Naive thymus-derived CD4-positive, alpha-beta T cell (primary cell): ENCODE measurements at regions of chr20 and their contacts with region 1.

Region 1: GRCh38 chr20:31514159-31515071 is at the start of gene HM13:
- DNase-seq: peak; percentile 79 to 89 (median 88)
- ATAC-seq: peak; percentile 96
- H3K4me3 ChIP-seq: peak within 1 kb of the TSS; percentile 90
- H3K4me3 Mint-ChIP-seq: peak within 1 kb of the TSS in 3 of 10 donors; percentile 48 to 77 (median 75)
- H3K27ac ChIP-seq: peak within 1 kb of the TSS; percentile 83
- H3K27ac Mint-ChIP-seq: peak within 1 kb of the TSS in 4 of 9 donors; percentile 80 to 92 (median 87)
- H3K4me1 ChIP-seq: peaks cover 26% of the 10 kb centered on the region in 2 donors
- H3K4me1 Mint-ChIP-seq: peaks cover 5 to 13% (median 9%) of the 10 kb centered on the region in 7 donors
- H3K27me3 ChIP-seq: no peaks in the 10 kb centered on the region
- H3K27me3 Mint-ChIP-seq: peaks cover 0 to under 1% (median 0%) of the 10 kb centered on the region in 5 donors
- total RNA-seq, gene HM13: 102 to 197 (median 133) TPM

Region 2: DNA sequence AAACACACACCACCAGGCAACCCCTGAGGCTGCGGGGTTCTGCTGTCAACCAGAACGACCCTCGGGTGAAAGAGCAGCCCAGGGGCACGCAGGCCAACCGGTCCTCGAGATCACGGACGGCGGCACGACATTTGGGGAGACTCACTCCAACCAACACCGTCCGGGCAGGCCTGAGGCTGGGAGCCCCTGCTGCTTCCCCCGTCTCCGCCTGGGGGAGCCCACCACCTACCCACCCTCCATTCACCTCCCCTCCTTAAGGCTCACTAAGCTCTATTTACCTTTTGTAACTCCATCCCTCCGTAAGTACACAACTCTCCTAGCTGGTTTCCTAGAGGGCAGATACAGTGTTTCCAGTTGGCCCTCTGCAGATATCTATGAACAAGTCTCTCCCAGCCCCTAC is 1228.3 kb before region 1 on chr20:
- CTCF ChIA-PET with region 1: no interaction called
- POLR2A ChIA-PET with region 1: no interaction called
- intact Hi-C with region 1: loop called in 1 of 2 experiments (anchors 10 kb)
- DNase-seq: no peak
- ATAC-seq: no peak
- H3K4me3 ChIP-seq: no peak overlapping the region
- H3K4me3 Mint-ChIP-seq: peak overlapping the region in 2 of 10 donors; percentile 17 to 58
- H3K27ac ChIP-seq: no peak overlapping the region
- H3K27ac Mint-ChIP-seq: peak overlapping the region in 4 of 9 donors; percentile 4 to 82 (median 35)
- H3K4me1 ChIP-seq: peaks cover 4 to 5% of the 10 kb centered on the region in 2 donors
- H3K4me1 Mint-ChIP-seq: peaks cover 0 to 58% (median 24%) of the 10 kb centered on the region in 7 donors
- H3K27me3 ChIP-seq: no peaks in the 10 kb centered on the region
- H3K27me3 Mint-ChIP-seq: no peaks in the 10 kb centered on the region

Region 3: DNA sequence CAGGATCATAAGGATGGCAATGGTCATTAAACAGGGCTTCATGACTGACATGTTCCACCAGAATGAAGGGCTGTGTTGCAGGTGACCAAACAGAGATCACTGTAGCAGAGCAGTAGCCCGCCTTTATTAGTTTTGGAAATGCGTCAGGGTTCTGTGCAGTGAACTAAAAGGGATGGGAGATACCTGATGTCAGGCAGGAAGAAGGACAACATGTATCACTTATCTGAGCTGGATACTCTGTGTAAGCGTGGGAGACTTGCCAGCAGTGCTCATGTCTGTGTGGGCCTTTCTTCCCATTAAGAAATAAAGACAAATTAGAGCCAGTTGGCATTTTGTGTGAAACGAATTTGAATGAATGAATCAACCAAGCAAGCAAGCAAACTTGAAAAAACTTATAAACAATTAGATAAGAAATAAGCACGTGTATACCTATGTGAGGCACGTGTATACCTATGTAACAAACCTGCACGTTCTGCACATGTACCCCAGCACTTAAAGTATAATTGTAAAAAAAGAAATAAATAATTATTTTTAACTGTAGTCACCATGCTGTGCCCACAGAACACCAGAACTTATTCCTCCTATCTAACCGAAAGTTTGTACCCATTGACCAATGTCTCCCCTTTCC is 205.8 kb before region 1 on chr20 and contains the start of gene DEFB116:
- CTCF ChIA-PET with region 1: no interaction called
- POLR2A ChIA-PET with region 1: no interaction called
- intact Hi-C with region 1: no loop called
- DNase-seq: no peak
- ATAC-seq: no peak
- H3K4me3 ChIP-seq: no peak within 1 kb of the TSS
- H3K4me3 Mint-ChIP-seq: no peak within 1 kb of the TSS
- H3K27ac ChIP-seq: no peak within 1 kb of the TSS
- H3K27ac Mint-ChIP-seq: no peak within 1 kb of the TSS
- H3K4me1 ChIP-seq: no peaks in the 10 kb centered on the region
- H3K4me1 Mint-ChIP-seq: peaks cover 0 to 2% (median 0%) of the 10 kb centered on the region in 7 donors
- H3K27me3 ChIP-seq: no peaks in the 10 kb centered on the region
- H3K27me3 Mint-ChIP-seq: peaks cover 0 to 9% (median 0%) of the 10 kb centered on the region in 5 donors
- total RNA-seq, gene DEFB116: not detected

Region 4: GRCh38 chr20:31494131-31494530 is 20.3 kb before region 1 on chr20:
- CTCF ChIA-PET with region 1: no interaction called
- POLR2A ChIA-PET with region 1: no interaction called
- intact Hi-C with region 1: no loop called
- DNase-seq: no peak
- ATAC-seq: no peak
- H3K4me3 ChIP-seq: no peak overlapping the region
- H3K4me3 Mint-ChIP-seq: no peak overlapping the region
- H3K27ac ChIP-seq: no peak overlapping the region
- H3K27ac Mint-ChIP-seq: no peak overlapping the region
- H3K4me1 ChIP-seq: no peaks in the 10 kb centered on the region
- H3K4me1 Mint-ChIP-seq: peaks cover 0 to 5% (median 0%) of the 10 kb centered on the region in 7 donors
- H3K27me3 ChIP-seq: peaks cover 0 to 4% of the 10 kb centered on the region in 2 donors
- H3K27me3 Mint-ChIP-seq: peaks cover 10 to 24% (median 18%) of the 10 kb centered on the region in 5 donors

Region 5: DNA sequence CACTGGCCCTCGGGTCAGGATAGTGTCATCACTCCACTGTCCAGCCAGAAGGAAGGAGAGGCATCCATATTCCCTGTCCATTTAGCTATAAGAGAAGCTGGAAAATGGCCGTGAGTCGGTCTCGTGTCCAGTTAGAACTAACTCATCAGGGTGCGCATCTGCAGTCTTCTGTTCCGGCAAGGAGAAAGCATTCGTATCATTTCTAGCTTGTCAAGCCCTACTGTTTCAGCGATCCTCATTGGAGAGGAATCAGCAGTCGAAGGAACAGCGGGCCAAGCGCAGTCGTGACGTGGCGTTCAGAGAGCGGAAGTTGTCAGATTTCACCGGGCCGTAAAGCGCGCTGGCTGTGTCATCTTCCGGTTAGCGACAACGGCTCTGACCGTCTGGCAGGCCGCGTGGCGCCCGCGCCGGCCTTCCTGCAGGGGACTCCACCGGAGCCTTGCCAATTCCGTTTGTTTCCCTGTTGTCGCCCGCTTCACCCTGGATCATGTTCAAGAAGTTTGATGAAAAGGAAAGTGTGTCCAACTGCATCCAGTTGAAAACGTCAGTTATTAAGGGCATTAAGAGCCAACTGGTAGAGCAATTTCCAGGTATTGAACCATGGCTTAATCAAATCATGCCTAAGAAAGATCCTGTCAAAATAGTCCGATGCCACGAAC is 32.7 kb after region 1 on chr20:
- CTCF ChIA-PET with region 1: no interaction called
- POLR2A ChIA-PET with region 1: interaction called, 3 read pairs
- intact Hi-C with region 1: loop called (anchors 1 kb)
- DNase-seq: peak; percentile 56 to 84 (median 80)
- ATAC-seq: peak; percentile 92
- H3K4me3 ChIP-seq: peak overlapping the region; percentile 85
- H3K4me3 Mint-ChIP-seq: peak overlapping the region; percentile 86 to 99 (median 94)
- H3K27ac ChIP-seq: peak overlapping the region; percentile 87
- H3K27ac Mint-ChIP-seq: peak overlapping the region; percentile 94 to 100 (median 98)
- H3K4me1 ChIP-seq: peaks cover 0 to 6% of the 10 kb centered on the region in 2 donors
- H3K4me1 Mint-ChIP-seq: peaks cover 8 to 36% (median 28%) of the 10 kb centered on the region in 7 donors
- H3K27me3 ChIP-seq: no peaks in the 10 kb centered on the region
- H3K27me3 Mint-ChIP-seq: no peaks in the 10 kb centered on the region

Region 6: DNA sequence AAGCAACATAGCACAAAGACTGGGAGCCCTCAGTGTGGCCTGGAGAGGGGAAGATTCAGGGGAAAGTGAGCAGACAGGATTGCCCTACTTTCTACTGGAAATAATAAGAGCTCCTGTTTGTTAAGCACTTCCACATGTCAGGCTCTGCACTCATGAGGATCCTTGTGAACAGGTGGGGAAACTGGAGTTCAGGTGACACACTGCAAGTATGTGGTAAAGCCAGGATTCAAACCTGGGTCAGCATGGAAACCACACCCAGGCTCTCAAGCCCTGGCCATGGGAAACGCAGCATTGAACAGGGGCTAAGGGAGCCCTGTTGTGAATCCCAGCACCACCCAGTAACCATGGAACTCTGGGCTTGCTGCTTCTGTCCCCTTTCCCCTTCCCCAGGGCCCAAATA is 47.8 kb after region 1 on chr20:
- CTCF ChIA-PET with region 1: no interaction called
- POLR2A ChIA-PET with region 1: no interaction called
- intact Hi-C with region 1: no loop called
- DNase-seq: no peak
- ATAC-seq: no peak
- H3K4me3 ChIP-seq: no peak overlapping the region
- H3K4me3 Mint-ChIP-seq: no peak overlapping the region
- H3K27ac ChIP-seq: no peak overlapping the region
- H3K27ac Mint-ChIP-seq: no peak overlapping the region
- H3K4me1 ChIP-seq: peaks cover 4 to 6% of the 10 kb centered on the region in 2 donors
- H3K4me1 Mint-ChIP-seq: peaks cover 6 to 25% (median 10%) of the 10 kb centered on the region in 7 donors
- H3K27me3 ChIP-seq: no peaks in the 10 kb centered on the region
- H3K27me3 Mint-ChIP-seq: no peaks in the 10 kb centered on the region

Region 7: DNA sequence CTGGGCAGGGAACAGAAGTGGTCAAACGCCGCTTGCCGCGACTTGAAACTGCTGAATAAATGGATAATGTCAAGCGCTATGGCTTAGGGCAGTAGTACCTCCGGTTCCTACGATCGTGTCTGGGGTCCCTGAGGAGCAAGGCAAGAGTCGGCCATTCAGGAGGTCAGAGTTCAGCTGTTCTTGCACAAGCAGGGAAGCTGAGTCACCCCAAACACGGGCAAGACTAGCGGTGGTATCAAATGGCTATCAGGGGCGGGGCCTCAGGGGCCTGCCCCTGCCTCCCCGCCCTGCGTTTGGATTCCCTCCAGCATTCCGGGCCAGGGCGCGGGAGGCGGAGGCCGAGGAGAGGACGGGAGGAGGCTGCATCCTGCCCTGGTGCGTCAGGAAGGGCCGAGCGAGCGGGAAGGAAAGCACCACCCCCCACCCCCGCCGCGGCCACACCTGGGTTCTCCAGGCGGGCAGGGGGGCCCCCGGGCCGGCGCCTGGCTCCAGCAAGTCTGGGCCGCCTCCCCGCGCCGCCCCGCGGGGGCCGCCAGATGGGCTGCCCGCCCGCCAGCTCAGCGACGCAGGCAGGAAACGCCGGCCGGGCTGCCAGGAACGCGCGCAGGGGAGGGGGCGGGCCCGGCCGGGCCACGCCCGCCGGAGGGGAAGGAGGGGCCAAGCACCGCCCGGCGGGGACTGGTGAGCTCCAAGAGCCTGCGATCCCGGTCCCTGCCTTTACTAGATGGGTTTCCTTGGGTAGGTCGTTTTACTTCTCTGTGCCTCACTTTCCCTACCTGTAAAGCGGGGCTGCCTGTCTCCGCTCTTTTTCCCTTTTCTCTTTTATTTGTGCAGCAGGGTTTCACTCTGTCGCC is 58.5 kb after region 1 on chr20:
- CTCF ChIA-PET with region 1: interaction called, 3 read pairs
- POLR2A ChIA-PET with region 1: interaction called, 3 read pairs
- intact Hi-C with region 1: loop called in 1 of 2 experiments (anchors 1 kb)
- DNase-seq: peak; percentile 67 to 85 (median 77)
- ATAC-seq: peak; percentile 95
- H3K4me3 ChIP-seq: peak overlapping the region; percentile 74
- H3K4me3 Mint-ChIP-seq: peak overlapping the region; percentile 85 to 93 (median 90)
- H3K27ac ChIP-seq: peak overlapping the region; percentile 87
- H3K27ac Mint-ChIP-seq: peak overlapping the region; percentile 89 to 96 (median 93)
- H3K4me1 ChIP-seq: peaks cover 5 to 9% of the 10 kb centered on the region in 2 donors
- H3K4me1 Mint-ChIP-seq: peaks cover 17 to 32% (median 22%) of the 10 kb centered on the region in 7 donors
- H3K27me3 ChIP-seq: no peaks in the 10 kb centered on the region
- H3K27me3 Mint-ChIP-seq: no peaks in the 10 kb centered on the region

Region 8: DNA sequence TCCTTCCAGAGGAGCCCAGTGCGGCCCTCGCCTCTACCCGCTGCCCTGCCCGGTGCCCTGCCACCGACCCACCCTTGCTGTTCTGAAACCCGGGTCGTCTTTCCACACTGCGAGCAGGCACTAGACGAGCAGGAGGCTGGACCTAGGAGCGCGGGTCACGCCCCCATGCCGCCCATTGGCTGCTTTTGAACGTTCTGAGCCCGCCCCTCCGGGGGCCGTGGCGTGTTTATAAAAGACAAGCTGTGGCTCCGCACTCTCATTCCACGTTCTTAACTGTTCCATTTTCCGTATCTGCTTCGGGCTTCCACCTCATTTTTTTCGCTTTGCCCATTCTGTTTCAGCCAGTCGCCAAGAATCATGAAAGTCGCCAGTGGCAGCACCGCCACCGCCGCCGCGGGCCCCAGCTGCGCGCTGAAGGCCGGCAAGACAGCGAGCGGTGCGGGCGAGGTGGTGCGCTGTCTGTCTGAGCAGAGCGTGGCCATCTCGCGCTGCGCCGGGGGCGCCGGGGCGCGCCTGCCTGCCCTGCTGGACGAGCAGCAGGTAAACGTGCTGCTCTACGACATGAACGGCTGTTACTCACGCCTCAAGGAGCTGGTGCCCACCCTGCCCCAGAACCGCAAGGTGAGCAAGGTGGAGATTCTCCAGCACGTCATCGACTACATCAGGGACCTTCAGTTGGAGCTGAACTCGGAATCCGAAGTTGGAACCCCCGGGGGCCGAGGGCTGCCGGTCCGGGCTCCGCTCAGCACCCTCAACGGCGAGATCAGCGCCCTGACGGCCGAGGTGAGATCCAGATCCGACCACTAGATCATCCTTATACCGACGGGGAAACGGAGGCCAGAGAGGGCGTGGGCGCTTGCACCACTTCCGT is 90.9 kb after region 1 on chr20 and contains the start of gene ID1:
- CTCF ChIA-PET with region 1: no interaction called
- POLR2A ChIA-PET with region 1: no interaction called
- intact Hi-C with region 1: loop called (anchors 2 kb)
- DNase-seq: peak; percentile 76 to 88 (median 86)
- ATAC-seq: peak; percentile 95
- H3K4me3 ChIP-seq: peak within 1 kb of the TSS; percentile 97
- H3K4me3 Mint-ChIP-seq: peak within 1 kb of the TSS; percentile 85 to 97 (median 96)
- H3K27ac ChIP-seq: peak within 1 kb of the TSS; percentile 42
- H3K27ac Mint-ChIP-seq: peak within 1 kb of the TSS in 8 of 9 donors; percentile 30 to 88 (median 71)
- H3K4me1 ChIP-seq: peaks cover 5 to 27% of the 10 kb centered on the region in 2 donors
- H3K4me1 Mint-ChIP-seq: peaks cover 7 to 29% (median 17%) of the 10 kb centered on the region in 7 donors
- H3K27me3 ChIP-seq: peaks cover 0 to 11% of the 10 kb centered on the region in 2 donors
- H3K27me3 Mint-ChIP-seq: peaks cover 24 to 62% (median 33%) of the 10 kb centered on the region in 5 donors
- total RNA-seq, gene ID1: 0.41 to 16.9 (median 0.62) TPM

Region 9: GRCh38 chr20:31661625-31662371 is 147.4 kb after region 1 on chr20:
- CTCF ChIA-PET with region 1: no interaction called
- POLR2A ChIA-PET with region 1: no interaction called
- intact Hi-C with region 1: loop called in 1 of 2 experiments (anchors 1 kb)
- DNase-seq: peak; percentile 48 to 81 (median 73)
- ATAC-seq: peak; percentile 97
- H3K4me3 ChIP-seq: peak overlapping the region; percentile 54
- H3K4me3 Mint-ChIP-seq: peak overlapping the region; percentile 61 to 89 (median 83)
- H3K27ac ChIP-seq: peak overlapping the region; percentile 69
- H3K27ac Mint-ChIP-seq: peak overlapping the region; percentile 66 to 91 (median 86)
- H3K4me1 ChIP-seq: peaks cover 4 to 17% of the 10 kb centered on the region in 2 donors
- H3K4me1 Mint-ChIP-seq: peaks cover 20 to 50% (median 32%) of the 10 kb centered on the region in 7 donors
- H3K27me3 ChIP-seq: no peaks in the 10 kb centered on the region
- H3K27me3 Mint-ChIP-seq: no peaks in the 10 kb centered on the region